GM12878 (cell line): ENCODE measurements at regions of chr2 and their contacts with region 1.

Region 1: GRCh38 chr2:178796079-178796677 is 11.0 kb downstream of the TTN start:
- DNase-seq: no peak
- ATAC-seq: peak; percentile 46; the same call in 1 of the 3 replicates
- H3K4me3 ChIP-seq: no peak overlapping the region
- H3K27ac ChIP-seq: no peak overlapping the region
- H3K4me1 ChIP-seq: no peaks in the 10 kb centered on the region
- H3K27me3 ChIP-seq: no peaks in the 10 kb centered on the region
- CTCF ChIP-seq: peak; percentile 29 to 57 (median 44); a peak in 3 of 6 replicates
- EP300 ChIP-seq: no peak
- POLR2A ChIP-seq: no peak
- RAD21 ChIP-seq: peak; percentile 62

Region 2: GRCh38 chr2:178550352-178550751 is 245.8 kb before region 1 on chr2:
- CTCF ChIA-PET with region 1: no interaction called
- POLR2A ChIA-PET with region 1: no interaction called
- RAD21 ChIA-PET with region 1: no interaction called
- SMC1A ChIA-PET with region 1: no interaction called
- in situ Hi-C with region 1: no loop called
- intact Hi-C with region 1: no loop called
- DNase-seq: no peak
- ATAC-seq: peak; percentile 70
- H3K4me3 ChIP-seq: no peak overlapping the region
- H3K27ac ChIP-seq: no peak overlapping the region
- H3K4me1 ChIP-seq: no peaks in the 10 kb centered on the region
- H3K27me3 ChIP-seq: no peaks in the 10 kb centered on the region
- CTCF ChIP-seq: no peak
- EP300 ChIP-seq: no peak
- POLR2A ChIP-seq: no peak
- RAD21 ChIP-seq: no peak

Region 3: DNA sequence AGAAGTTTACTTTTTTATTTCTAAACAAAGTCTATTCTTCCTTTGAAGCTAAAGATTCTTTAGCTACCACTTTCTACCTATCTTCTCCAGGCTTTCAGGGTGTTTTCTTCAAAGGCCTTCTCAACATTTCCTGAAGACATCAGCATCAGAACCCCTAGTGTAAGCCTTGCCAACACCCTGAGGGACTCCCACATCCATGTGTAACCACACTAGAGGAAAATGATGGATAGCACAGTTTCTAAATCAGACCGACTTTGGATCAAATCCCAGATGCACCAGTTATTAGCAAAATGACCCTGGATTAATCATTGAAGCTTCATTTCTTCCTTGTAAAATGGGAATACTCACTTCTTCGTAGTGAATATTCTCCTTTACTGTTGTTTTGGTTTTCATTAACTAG is 15.7 kb after region 1 on chr2:
- CTCF ChIA-PET with region 1: interaction called, 11 read pairs
- POLR2A ChIA-PET with region 1: interaction called, 3 read pairs
- RAD21 ChIA-PET with region 1: no interaction called
- SMC1A ChIA-PET with region 1: interaction called, 3 read pairs
- in situ Hi-C with region 1: no loop called
- intact Hi-C with region 1: no loop called
- DNase-seq: no peak
- ATAC-seq: no peak
- H3K4me3 ChIP-seq: no peak overlapping the region
- H3K27ac ChIP-seq: no peak overlapping the region
- H3K4me1 ChIP-seq: no peaks in the 10 kb centered on the region
- H3K27me3 ChIP-seq: no peaks in the 10 kb centered on the region
- CTCF ChIP-seq: no peak
- EP300 ChIP-seq: no peak
- POLR2A ChIP-seq: no peak
- RAD21 ChIP-seq: no peak

Region 4: GRCh38 chr2:178819992-178820391 is 23.8 kb after region 1 on chr2:
- CTCF ChIA-PET with region 1: interaction called, 14 read pairs
- POLR2A ChIA-PET with region 1: no interaction called
- RAD21 ChIA-PET with region 1: interaction called, 12 read pairs
- SMC1A ChIA-PET with region 1: interaction called, 8 read pairs
- in situ Hi-C with region 1: no loop called
- intact Hi-C with region 1: no loop called
- DNase-seq: peak; percentile 17
- ATAC-seq: peak; percentile 90
- H3K4me3 ChIP-seq: no peak overlapping the region
- H3K27ac ChIP-seq: no peak overlapping the region; the same call in 1 of the 2 replicates
- H3K4me1 ChIP-seq: peaks cover 6% of the 10 kb centered on the region; the same call in 1 of the 2 replicates
- H3K27me3 ChIP-seq: no peaks in the 10 kb centered on the region
- CTCF ChIP-seq: no peak
- EP300 ChIP-seq: no peak
- POLR2A ChIP-seq: no peak
- RAD21 ChIP-seq: 0 out of 2 replicates have a peak, but pooled peaks have one; percentile 3